Lower lobe of right lung (tissue), 2 donors: ENCODE measurements at regions of chr5 and their contacts with region 1.

Region 1: DNA sequence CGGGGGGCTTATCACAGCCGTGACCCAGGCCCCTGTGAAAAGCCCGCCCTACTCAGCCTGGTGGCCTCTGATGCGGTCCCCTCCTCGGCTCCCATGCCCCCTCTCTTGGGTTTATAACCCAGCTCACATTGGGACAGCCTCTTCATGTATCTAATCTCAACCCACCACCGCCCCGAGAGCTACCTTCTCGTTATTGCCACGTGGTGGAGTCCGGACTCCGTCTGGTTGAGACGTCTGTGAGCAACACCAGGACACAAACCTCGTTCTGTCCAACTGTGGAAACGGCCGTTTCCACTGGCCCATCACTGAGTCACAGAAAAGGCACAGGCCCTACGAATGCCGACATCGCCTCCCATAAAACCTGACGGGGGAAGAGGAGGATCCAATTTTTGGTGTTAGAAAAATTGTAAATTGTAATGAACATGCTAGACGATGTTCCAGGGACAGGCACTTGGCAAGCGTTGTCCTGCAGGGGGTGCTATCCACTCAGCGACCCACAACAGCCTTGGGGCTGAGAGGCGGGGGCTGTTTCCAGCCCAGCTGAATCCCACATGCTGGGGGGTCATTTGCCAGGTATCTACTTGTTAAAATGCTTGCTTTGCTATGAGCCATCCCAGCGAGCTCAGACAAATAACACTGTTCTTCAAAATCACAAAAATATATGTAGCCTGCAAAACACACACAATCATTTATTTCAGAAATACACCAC is 37.3 kb upstream of the N4BP3 start:
- DNase-seq: peak; percentile 74
- ATAC-seq: peak; percentile 86 to 89
- H3K4me3 ChIP-seq: no peak overlapping the region
- H3K27ac ChIP-seq: no peak overlapping the region
- H3K4me1 ChIP-seq: peaks cover 6% of the 10 kb centered on the region
- H3K27me3 ChIP-seq: peaks cover 20% of the 10 kb centered on the region
- CTCF ChIP-seq: peak; percentile 93

Region 2: DNA sequence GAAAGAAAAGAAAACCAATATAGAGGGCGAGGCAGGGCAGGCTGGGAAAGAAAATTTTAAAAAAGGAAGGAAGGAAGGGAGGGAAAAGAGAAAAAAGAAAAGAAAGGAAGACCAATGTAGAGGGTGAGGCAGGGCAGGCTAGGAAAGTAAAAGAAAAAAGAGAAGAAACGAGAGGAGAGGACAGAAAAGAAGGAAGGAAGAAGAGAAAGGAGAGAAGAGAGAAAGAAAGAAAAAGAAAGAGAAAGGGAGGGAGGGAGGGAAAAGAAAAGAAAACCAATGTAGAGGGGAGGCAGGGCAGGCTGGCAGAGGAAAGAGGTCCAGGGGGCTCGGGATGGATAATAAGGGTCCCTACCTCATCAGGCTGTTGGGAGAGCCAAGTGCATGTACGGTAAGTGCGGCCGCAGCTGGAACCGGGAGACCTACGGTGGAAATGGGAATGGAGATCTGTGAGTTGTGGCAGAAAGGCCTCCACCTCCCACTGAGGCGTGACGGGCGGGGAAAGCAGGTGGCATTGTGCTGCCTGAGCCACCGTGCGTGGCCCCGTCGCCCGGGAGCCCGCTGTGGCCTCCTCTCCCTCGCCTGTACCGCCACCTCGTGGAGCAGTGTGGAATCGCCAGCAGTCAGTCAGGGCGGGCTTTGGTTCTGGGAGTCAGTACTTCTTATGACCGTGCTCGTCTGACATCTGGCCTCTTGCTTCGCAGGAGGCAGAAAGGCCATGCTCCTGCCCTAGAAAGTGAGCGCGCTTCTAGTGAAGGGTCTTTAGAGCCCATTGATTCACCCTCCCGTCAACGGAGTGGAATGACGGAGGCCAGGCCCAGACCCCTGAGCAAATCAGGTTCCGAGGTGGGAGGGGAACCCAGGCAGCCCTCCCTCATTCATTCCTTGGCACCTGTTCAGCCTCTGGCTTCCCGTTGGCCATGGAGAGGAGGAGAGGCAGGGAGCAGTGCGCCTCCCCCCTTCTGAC is 88.1 kb after region 1 on chr5:
- intact Hi-C with region 1: loop called (anchors 5 kb)
- DNase-seq: peak; percentile 88
- ATAC-seq: peak; percentile 98
- H3K4me3 ChIP-seq: no peak overlapping the region
- H3K27ac ChIP-seq: no peak overlapping the region
- H3K4me1 ChIP-seq: peaks cover 9% of the 10 kb centered on the region
- H3K27me3 ChIP-seq: peaks cover 26% of the 10 kb centered on the region
- CTCF ChIP-seq: peak; percentile 100

Region 3: DNA sequence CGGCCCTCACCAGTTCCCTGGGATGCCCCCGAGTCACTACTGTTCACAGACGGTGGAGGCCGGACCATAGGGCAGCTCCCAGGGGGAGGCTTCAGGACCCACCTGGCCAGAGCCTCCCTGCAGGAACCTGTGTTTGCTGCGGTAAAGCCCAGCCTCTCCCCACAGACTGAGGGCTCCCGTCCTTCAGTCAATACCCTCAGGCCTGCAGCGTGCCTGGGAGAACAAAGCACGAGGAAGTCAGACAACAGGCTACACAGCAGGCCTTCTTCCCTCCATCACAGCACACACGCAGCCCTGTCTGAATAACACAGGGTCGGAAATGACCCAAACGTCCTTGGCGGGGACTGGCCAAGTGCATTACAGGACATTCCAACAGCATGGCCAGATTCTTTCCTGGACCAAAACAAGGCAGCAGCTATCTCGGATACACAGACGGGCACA is 479.8 kb after region 1 on chr5:
- intact Hi-C with region 1: no loop called
- DNase-seq: no peak
- ATAC-seq: no peak
- H3K4me3 ChIP-seq: no peak overlapping the region
- H3K27ac ChIP-seq: no peak overlapping the region
- H3K4me1 ChIP-seq: no peaks in the 10 kb centered on the region
- H3K27me3 ChIP-seq: no peaks in the 10 kb centered on the region
- CTCF ChIP-seq: no peak